Naive thymus-derived CD4-positive, alpha-beta T cell (primary cell): ENCODE measurements at regions of chr2 and their contacts with region 1.

Region 1: GRCh38 chr2:151808258-151809072 is 19.8 kb downstream of the ARL5A start:
- DNase-seq: peak in 5 of 9 donors; percentile 25 to 50 (median 41)
- ATAC-seq: peak; percentile 87
- H3K4me3 ChIP-seq: no peak overlapping the region
- H3K4me3 Mint-ChIP-seq: peak overlapping the region in 1 of 10 donors; percentile 49
- H3K27ac ChIP-seq: no peak overlapping the region
- H3K27ac Mint-ChIP-seq: peak overlapping the region in 2 of 9 donors; percentile 3 to 32
- H3K4me1 ChIP-seq: peaks cover 0 to 8% of the 10 kb centered on the region in 2 donors
- H3K4me1 Mint-ChIP-seq: peaks cover 0 to 10% (median 5%) of the 10 kb centered on the region in 7 donors
- H3K27me3 ChIP-seq: no peaks in the 10 kb centered on the region
- H3K27me3 Mint-ChIP-seq: no peaks in the 10 kb centered on the region

Region 2: GRCh38 chr2:151614606-151615306 is 193.7 kb before region 1 on chr2:
- CTCF ChIA-PET with region 1: interaction called, 3 read pairs
- POLR2A ChIA-PET with region 1: no interaction called
- intact Hi-C with region 1: loop called in 1 of 2 experiments (anchors 1 kb)
- DNase-seq: no peak
- ATAC-seq: no peak
- H3K4me3 ChIP-seq: no peak overlapping the region
- H3K4me3 Mint-ChIP-seq: peak overlapping the region in 2 of 10 donors; percentile 17 to 70
- H3K27ac ChIP-seq: no peak overlapping the region
- H3K27ac Mint-ChIP-seq: peak overlapping the region in 3 of 9 donors; percentile 14 to 54 (median 28)
- H3K4me1 ChIP-seq: no peaks in the 10 kb centered on the region
- H3K4me1 Mint-ChIP-seq: peaks cover 10 to 26% (median 14%) of the 10 kb centered on the region in 7 donors
- H3K27me3 ChIP-seq: no peaks in the 10 kb centered on the region
- H3K27me3 Mint-ChIP-seq: peaks cover 0 to 6% (median 0%) of the 10 kb centered on the region in 5 donors

Region 3: GRCh38 chr2:151638191-151638933 is 170.1 kb before region 1 on chr2:
- CTCF ChIA-PET with region 1: no interaction called
- POLR2A ChIA-PET with region 1: no interaction called
- intact Hi-C with region 1: loop called in 1 of 2 experiments (anchors 1 kb)
- DNase-seq: peak in 8 of 9 donors; percentile 23 to 66 (median 52)
- ATAC-seq: peak; percentile 59
- H3K4me3 ChIP-seq: peak overlapping the region; percentile 42
- H3K4me3 Mint-ChIP-seq: peak overlapping the region; percentile 18 to 89 (median 84)
- H3K27ac ChIP-seq: peak overlapping the region; percentile 69
- H3K27ac Mint-ChIP-seq: peak overlapping the region; percentile 90 to 97 (median 94)
- H3K4me1 ChIP-seq: peaks cover 33 to 40% of the 10 kb centered on the region in 2 donors
- H3K4me1 Mint-ChIP-seq: peaks cover 32 to 57% (median 38%) of the 10 kb centered on the region in 7 donors
- H3K27me3 ChIP-seq: no peaks in the 10 kb centered on the region
- H3K27me3 Mint-ChIP-seq: no peaks in the 10 kb centered on the region

Region 4: DNA sequence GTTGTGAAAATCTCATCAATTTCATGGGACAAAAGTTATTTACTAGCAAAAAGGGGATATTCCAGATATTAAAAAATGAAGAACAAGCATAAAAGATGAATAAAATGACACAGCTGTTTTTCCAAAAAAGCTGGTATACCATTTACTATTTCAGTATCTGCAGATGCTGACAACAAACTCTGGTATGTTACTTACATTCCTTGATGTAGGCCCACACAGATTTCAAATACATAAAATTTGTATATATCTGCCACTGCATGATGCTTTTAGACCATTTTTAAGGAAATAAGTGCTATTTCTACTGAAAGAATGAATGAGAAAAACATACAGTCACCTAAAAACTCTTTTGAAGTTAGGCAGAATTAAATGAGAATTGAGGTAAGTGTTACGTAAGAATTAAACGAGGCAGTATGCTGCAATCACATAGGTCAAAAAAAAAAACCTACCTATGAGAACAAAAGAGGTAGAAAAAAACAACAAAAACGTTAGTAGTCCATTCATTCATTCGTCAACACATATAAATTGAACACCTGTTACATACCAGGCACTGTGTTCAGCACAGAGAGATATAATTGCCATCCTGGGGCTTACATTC is 12.7 kb before region 1 on chr2:
- CTCF ChIA-PET with region 1: no interaction called
- POLR2A ChIA-PET with region 1: no interaction called
- intact Hi-C with region 1: loop called in 1 of 2 experiments (anchors 1 kb)
- DNase-seq: no peak
- ATAC-seq: no peak
- H3K4me3 ChIP-seq: no peak overlapping the region
- H3K4me3 Mint-ChIP-seq: no peak overlapping the region
- H3K27ac ChIP-seq: no peak overlapping the region
- H3K27ac Mint-ChIP-seq: peak overlapping the region in 1 of 9 donors; percentile 9
- H3K4me1 ChIP-seq: no peaks in the 10 kb centered on the region
- H3K4me1 Mint-ChIP-seq: no peaks in the 10 kb centered on the region
- H3K27me3 ChIP-seq: no peaks in the 10 kb centered on the region
- H3K27me3 Mint-ChIP-seq: no peaks in the 10 kb centered on the region

Region 5: GRCh38 chr2:151999053-151999452 is 190.6 kb after region 1 on chr2:
- CTCF ChIA-PET with region 1: no interaction called
- POLR2A ChIA-PET with region 1: no interaction called
- intact Hi-C with region 1: loop called in 1 of 2 experiments (anchors 1 kb)
- DNase-seq: peak in 7 of 9 donors; percentile 11 to 38 (median 14)
- ATAC-seq: peak; percentile 77
- H3K4me3 ChIP-seq: no peak overlapping the region
- H3K4me3 Mint-ChIP-seq: no peak overlapping the region
- H3K27ac ChIP-seq: no peak overlapping the region
- H3K27ac Mint-ChIP-seq: no peak overlapping the region
- H3K4me1 ChIP-seq: no peaks in the 10 kb centered on the region
- H3K4me1 Mint-ChIP-seq: peaks cover 0 to under 1% (median 0%) of the 10 kb centered on the region in 7 donors
- H3K27me3 ChIP-seq: no peaks in the 10 kb centered on the region
- H3K27me3 Mint-ChIP-seq: peaks cover 0 to 1% (median 0%) of the 10 kb centered on the region in 5 donors